ENCODE measurements at regions of chr3 and their contacts with region 1.

Region 1: GRCh38 chr3:163159306-163159705 is 1662.7 kb downstream of the OTOL1 start:
- DNase-seq: no peak
- ATAC-seq: no peak
- H3K4me3 ChIP-seq: no peak overlapping the region
- H3K4me3 Mint-ChIP-seq: no peak overlapping the region
- H3K27ac ChIP-seq: no peak overlapping the region
- H3K27ac Mint-ChIP-seq: no peak overlapping the region
- H3K4me1 ChIP-seq: no peaks in the 10 kb centered on the region
- H3K4me1 Mint-ChIP-seq: peaks cover 0 to 2% (median 0%) of the 10 kb centered on the region in 7 donors
- H3K27me3 ChIP-seq: no peaks in the 10 kb centered on the region
- H3K27me3 Mint-ChIP-seq: no peaks in the 10 kb centered on the region

Region 2: DNA sequence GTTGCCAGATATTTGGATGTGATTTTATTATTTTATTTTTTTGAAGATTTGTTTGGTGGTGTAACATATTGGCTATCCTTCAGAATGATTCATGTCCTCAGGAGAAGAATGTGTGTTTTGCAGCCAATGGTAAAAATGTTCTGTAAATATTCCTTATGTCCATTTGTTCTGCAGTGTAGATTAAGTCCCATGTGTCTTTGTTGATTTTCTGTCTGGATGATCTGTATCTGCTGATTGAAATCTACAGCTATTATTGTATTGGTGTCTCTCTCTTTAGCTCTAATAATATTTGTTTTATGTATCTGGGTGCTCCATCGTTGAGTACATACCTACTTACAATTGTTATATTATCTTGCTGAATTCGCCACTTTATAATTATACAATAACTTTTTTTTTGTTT is 21.0 kb before region 1 on chr3:
- CTCF ChIA-PET with region 1: no interaction called
- POLR2A ChIA-PET with region 1: no interaction called
- intact Hi-C with region 1: loop called in 1 of 2 experiments (anchors 2 kb)
- DNase-seq: no peak
- ATAC-seq: no peak
- H3K4me3 ChIP-seq: no peak overlapping the region
- H3K4me3 Mint-ChIP-seq: no peak overlapping the region
- H3K27ac ChIP-seq: no peak overlapping the region
- H3K27ac Mint-ChIP-seq: no peak overlapping the region
- H3K4me1 ChIP-seq: no peaks in the 10 kb centered on the region
- H3K4me1 Mint-ChIP-seq: no peaks in the 10 kb centered on the region
- H3K27me3 ChIP-seq: no peaks in the 10 kb centered on the region
- H3K27me3 Mint-ChIP-seq: no peaks in the 10 kb centered on the region

Measured in naive thymus-derived CD4-positive, alpha-beta T cell (primary cell).